ENCODE measurements at regions of chr6 and their contacts with region 1.

Region 1: DNA sequence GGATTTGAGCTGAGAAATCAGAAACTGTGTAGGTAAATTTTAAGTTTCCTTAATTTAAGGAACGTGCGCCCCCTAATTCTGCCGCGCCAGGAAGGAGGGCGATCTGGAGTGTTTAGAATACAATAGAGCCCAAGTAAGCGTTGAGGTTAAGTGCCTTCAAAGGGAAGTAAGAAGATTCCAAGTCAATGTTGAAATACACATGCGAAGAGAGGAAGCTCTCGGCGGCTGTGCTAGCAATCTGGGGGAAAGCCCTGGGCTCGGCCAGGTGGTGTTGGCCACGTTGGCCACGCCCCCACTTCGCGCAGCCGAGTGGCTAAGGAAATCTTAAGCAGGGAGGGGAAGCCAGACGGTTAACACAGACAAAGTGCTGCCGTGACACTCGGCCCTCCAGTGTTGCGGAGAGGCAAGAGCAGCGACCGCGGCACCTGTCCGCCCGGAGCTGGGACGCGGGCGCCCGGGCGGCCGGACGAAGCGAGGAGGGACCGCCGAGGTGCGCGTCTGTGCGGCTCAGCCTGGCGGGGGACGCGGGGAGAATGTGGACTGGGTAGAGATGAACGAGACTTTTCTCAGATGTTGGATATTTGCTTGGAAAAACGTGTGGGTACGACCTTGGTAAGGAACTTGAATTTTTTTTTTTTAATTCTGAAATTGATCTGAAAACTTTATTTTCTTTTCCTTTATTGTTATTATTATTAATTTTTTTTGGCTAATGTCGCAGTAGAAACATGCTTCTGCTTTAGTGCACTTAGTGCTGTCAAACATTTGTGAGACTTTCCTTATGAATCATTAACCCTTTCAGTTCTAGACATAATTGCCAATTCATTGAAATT is at the start of gene PRDM1:
- DNase-seq: peak; percentile 87
- H3K4me3 Mint-ChIP-seq: peak within 1 kb of the TSS; percentile 75
- H3K27ac Mint-ChIP-seq: peak within 1 kb of the TSS; percentile 6
- H3K4me1 Mint-ChIP-seq: peaks cover 51% of the 10 kb centered on the region
- H3K27me3 Mint-ChIP-seq: peaks cover 46% of the 10 kb centered on the region
- total RNA-seq, gene PRDM1: 3.4 to 4.0 TPM

Region 2: DNA sequence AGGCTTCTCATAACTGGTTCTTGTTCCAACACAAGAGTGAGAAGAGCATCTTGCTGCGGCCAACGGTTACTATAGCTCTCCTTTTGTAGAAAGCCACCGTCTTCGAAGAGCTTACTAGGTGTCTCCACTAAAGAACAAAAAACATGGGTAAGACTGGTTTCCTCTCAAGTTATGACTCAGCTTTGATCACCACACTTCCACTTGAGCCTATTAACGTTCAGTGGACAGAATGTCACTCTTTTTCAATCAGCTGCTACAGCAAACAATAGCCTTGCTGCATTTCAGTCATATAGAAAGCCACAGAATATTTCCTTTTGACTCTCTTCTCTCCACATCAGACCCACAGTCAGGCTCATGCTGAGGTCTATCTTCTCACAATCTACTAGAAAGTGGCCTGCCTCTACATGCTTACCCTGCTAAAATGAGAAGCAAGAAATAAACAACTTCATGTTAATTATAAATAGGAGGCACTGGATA is 439.8 kb before region 1 on chr6:
- CTCF ChIA-PET with region 1: no interaction called
- intact Hi-C with region 1: loop called (anchors 2 kb)
- DNase-seq: peak; percentile 35
- H3K4me3 Mint-ChIP-seq: no peak overlapping the region
- H3K27ac Mint-ChIP-seq: no peak overlapping the region
- H3K4me1 Mint-ChIP-seq: peaks cover 46% of the 10 kb centered on the region
- H3K27me3 Mint-ChIP-seq: peaks cover 20% of the 10 kb centered on the region

Region 3: DNA sequence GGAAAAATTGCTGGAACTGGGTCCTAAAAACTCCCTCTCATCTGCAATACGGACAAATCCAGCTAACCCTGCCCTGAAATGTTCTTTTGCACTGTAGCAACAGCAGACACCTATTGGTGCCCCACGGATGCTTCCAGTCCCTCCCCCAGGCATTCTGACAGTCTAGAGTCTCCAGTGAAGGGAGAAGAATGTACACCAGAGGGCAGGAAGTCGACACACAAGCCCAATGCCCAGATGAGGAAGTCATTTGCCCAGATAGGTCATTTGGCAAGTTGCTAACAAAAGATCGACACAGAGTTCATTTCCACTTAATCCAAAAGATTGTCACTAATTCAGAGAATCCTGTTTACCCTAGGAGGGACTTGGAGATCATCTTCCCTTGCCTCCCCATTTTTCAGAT is 293.1 kb before region 1 on chr6:
- CTCF ChIA-PET with region 1: interaction called, 3 read pairs
- intact Hi-C with region 1: loop called (anchors 2 kb)
- DNase-seq: peak; percentile 30
- H3K4me3 Mint-ChIP-seq: no peak overlapping the region
- H3K27ac Mint-ChIP-seq: no peak overlapping the region
- H3K4me1 Mint-ChIP-seq: peaks cover 43% of the 10 kb centered on the region
- H3K27me3 Mint-ChIP-seq: no peaks in the 10 kb centered on the region

Region 4: GRCh38 chr6:105981002-105981887 is 105.0 kb before region 1 on chr6:
- CTCF ChIA-PET with region 1: no interaction called
- intact Hi-C with region 1: loop called (anchors 1 kb)
- DNase-seq: peak; percentile 58
- H3K4me3 Mint-ChIP-seq: peak overlapping the region; percentile 62
- H3K27ac Mint-ChIP-seq: peak overlapping the region; percentile 79
- H3K4me1 Mint-ChIP-seq: peaks cover 26% of the 10 kb centered on the region
- H3K27me3 Mint-ChIP-seq: peaks cover 52% of the 10 kb centered on the region

Region 5: GRCh38 chr6:106315765-106316374 is 229.7 kb after region 1 on chr6:
- CTCF ChIA-PET with region 1: no interaction called
- intact Hi-C with region 1: no loop called
- DNase-seq: peak; percentile 20
- H3K4me3 Mint-ChIP-seq: no peak overlapping the region
- H3K27ac Mint-ChIP-seq: peak overlapping the region; percentile 32
- H3K4me1 Mint-ChIP-seq: peaks cover 53% of the 10 kb centered on the region
- H3K27me3 Mint-ChIP-seq: no peaks in the 10 kb centered on the region

Measured in activated naive CD4-positive, alpha-beta T cell treated with anti-CD3 and anti-CD28 coated beads for 36 hours (primary cell).